ENCODE measurements at regions of chr19 and their contacts with region 1.

Region 1: GRCh38 chr19:45187421-45188100 is 9.0 kb downstream of the BLOC1S3 start:
- DNase-seq: peak in 7 of 9 donors; percentile 29 to 65 (median 55)
- ATAC-seq: peak; percentile 79
- H3K4me3 ChIP-seq: no peak overlapping the region
- H3K4me3 Mint-ChIP-seq: no peak overlapping the region
- H3K27ac ChIP-seq: no peak overlapping the region
- H3K27ac Mint-ChIP-seq: peak overlapping the region in 1 of 9 donors; percentile 55
- H3K4me1 ChIP-seq: no peaks in the 10 kb centered on the region
- H3K4me1 Mint-ChIP-seq: peaks cover 8 to 21% (median 16%) of the 10 kb centered on the region in 7 donors
- H3K27me3 ChIP-seq: no peaks in the 10 kb centered on the region
- H3K27me3 Mint-ChIP-seq: no peaks in the 10 kb centered on the region

Region 2: GRCh38 chr19:44903602-44904425 is 283.7 kb before region 1 on chr19:
- CTCF ChIA-PET with region 1: no interaction called
- POLR2A ChIA-PET with region 1: no interaction called
- intact Hi-C with region 1: loop called in 1 of 2 experiments (anchors 2 kb)
- DNase-seq: peak; percentile 49 to 86 (median 70)
- ATAC-seq: peak; percentile 81
- H3K4me3 ChIP-seq: no peak overlapping the region
- H3K4me3 Mint-ChIP-seq: no peak overlapping the region
- H3K27ac ChIP-seq: no peak overlapping the region
- H3K27ac Mint-ChIP-seq: peak overlapping the region in 2 of 9 donors; percentile 19 to 49
- H3K4me1 ChIP-seq: no peaks in the 10 kb centered on the region
- H3K4me1 Mint-ChIP-seq: peaks cover 5 to 13% (median 10%) of the 10 kb centered on the region in 7 donors
- H3K27me3 ChIP-seq: peaks cover 0 to 4% of the 10 kb centered on the region in 2 donors
- H3K27me3 Mint-ChIP-seq: peaks cover 18 to 22% (median 20%) of the 10 kb centered on the region in 5 donors

Region 3: DNA sequence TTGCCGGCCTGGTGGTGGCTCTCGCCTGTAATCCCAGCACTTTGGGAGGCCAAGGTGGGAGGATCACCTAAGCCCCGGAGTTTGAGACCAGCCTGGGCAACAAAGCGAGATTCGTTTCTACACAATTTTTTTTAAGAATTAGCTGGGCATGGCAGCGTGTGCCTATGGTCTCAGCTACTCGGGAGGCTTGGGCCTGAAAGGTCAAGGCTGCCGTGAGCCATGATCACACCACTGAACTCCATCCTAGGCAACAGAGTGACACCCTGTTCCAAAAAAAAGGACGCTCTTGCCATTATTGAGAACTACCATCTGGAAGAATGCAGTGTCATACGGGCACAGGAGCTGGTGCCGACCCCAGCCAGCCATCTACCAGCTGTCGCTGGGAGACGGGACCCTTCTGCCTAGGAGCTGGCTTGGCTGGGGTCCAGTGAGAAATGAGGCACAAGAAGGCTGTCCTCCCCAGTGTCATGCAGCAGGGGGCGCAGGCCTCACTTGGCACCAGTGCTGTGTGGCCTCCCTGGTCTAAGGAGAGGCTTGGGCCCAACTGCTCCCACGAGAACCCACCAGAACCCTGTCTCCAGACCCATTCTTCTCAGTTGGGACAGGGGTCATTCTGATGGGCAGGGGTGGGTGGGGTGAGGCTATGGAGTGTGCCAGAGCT is 198.5 kb before region 1 on chr19:
- CTCF ChIA-PET with region 1: no interaction called
- POLR2A ChIA-PET with region 1: no interaction called
- intact Hi-C with region 1: loop called in 1 of 2 experiments (anchors 1 kb)
- DNase-seq: peak; percentile 34 to 64 (median 55)
- ATAC-seq: peak; percentile 86
- H3K4me3 ChIP-seq: no peak overlapping the region
- H3K4me3 Mint-ChIP-seq: no peak overlapping the region
- H3K27ac ChIP-seq: no peak overlapping the region
- H3K27ac Mint-ChIP-seq: peak overlapping the region in 2 of 9 donors; percentile 41 to 85
- H3K4me1 ChIP-seq: no peaks in the 10 kb centered on the region
- H3K4me1 Mint-ChIP-seq: peaks cover 0 to 2% (median 0%) of the 10 kb centered on the region in 7 donors
- H3K27me3 ChIP-seq: no peaks in the 10 kb centered on the region
- H3K27me3 Mint-ChIP-seq: no peaks in the 10 kb centered on the region

Region 4: DNA sequence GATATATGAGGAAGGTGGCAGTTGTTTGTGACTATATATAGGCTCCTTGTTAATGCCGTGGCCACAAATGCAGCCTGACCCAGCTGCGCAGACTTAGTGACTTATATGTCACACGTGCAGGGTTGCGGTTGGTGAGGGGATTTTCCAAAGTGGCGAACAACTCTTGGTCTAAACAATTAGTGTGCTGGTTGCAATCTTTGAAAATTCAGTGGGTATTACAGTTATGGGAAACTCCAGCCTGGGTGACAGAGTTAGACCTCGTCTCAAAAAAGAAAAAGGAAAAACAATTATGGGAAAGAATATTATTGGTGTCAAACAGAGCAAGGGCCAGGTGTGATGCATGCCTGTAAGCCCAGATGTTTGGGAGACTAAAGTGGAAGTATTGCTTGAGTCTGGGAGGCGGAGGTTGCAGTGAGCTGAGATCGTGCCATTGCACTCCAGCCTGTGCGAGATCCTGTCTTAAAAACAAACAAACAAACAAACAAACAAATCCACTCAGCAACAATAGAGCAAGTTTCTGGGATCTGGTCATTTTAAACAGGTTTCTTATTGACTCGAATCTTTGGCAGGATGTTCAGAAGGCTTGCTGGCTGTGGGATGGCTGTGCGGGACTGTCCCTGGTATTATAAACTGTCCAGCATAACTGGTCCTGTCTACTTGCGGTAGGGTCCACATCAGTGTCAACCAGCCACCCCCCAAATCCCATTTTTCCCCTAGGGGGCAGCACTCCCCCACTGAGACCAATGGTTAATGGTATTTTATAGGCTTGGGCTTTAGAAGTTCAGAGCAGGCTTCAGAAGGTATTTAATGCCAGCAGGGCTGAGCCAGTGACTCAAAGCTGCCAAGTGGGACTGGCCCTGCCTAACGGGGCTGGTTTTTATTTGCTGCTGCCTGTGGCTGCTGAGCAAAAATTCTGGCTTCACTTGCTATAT is 170.9 kb before region 1 on chr19:
- CTCF ChIA-PET with region 1: interaction called, 3 read pairs
- POLR2A ChIA-PET with region 1: no interaction called
- intact Hi-C with region 1: loop called in 1 of 2 experiments (anchors 1 kb)
- DNase-seq: peak; percentile 28 to 75 (median 61)
- ATAC-seq: peak; percentile 81
- H3K4me3 ChIP-seq: peak overlapping the region; percentile 4
- H3K4me3 Mint-ChIP-seq: peak overlapping the region in 1 of 10 donors; percentile 25
- H3K27ac ChIP-seq: peak overlapping the region; percentile 40
- H3K27ac Mint-ChIP-seq: peak overlapping the region; percentile 23 to 89 (median 54)
- H3K4me1 ChIP-seq: peaks cover 0 to 11% of the 10 kb centered on the region in 2 donors
- H3K4me1 Mint-ChIP-seq: peaks cover 0 to 9% (median 0%) of the 10 kb centered on the region in 7 donors
- H3K27me3 ChIP-seq: no peaks in the 10 kb centered on the region
- H3K27me3 Mint-ChIP-seq: no peaks in the 10 kb centered on the region

Region 5: DNA sequence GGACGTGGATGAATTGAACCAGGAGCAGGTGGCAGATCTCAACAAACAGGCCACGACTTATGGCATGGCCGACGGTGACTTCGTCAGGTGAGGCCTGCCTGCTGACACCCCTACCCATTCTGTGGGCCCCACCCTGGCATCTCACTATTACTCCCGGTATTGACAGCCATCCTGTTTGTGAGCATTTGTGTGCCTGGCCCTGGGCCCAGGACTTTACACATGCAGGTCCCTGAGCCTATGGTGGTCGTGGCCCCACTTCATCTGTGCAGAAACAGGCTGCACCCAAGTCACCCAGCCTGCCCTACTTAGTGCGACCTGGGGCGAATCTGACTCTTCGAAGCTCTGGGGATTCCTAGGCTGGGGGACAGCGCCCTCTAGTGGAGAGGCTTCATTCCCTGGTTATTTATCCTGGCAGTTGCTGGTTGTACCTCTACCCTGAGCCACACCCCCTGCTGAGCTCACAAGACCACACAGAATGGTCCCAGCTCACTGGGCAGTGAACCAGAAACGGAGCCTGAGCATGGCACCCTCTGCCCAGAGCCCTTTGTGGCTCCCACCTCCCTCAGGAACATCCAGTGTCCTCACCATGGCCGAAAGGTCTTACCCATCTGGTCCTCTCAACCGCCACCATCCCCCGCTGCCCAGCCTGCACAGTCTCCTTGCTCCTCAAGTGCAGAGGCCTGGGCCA is 128.1 kb before region 1 on chr19:
- CTCF ChIA-PET with region 1: no interaction called
- POLR2A ChIA-PET with region 1: no interaction called
- intact Hi-C with region 1: loop called in 1 of 2 experiments (anchors 1 kb)
- DNase-seq: peak; percentile 60 to 86 (median 75)
- ATAC-seq: peak; percentile 95
- H3K4me3 ChIP-seq: no peak overlapping the region
- H3K4me3 Mint-ChIP-seq: no peak overlapping the region
- H3K27ac ChIP-seq: no peak overlapping the region
- H3K27ac Mint-ChIP-seq: peak overlapping the region in 8 of 9 donors; percentile 16 to 90 (median 66)
- H3K4me1 ChIP-seq: no peaks in the 10 kb centered on the region
- H3K4me1 Mint-ChIP-seq: peaks cover 0 to 15% (median 3%) of the 10 kb centered on the region in 7 donors
- H3K27me3 ChIP-seq: no peaks in the 10 kb centered on the region
- H3K27me3 Mint-ChIP-seq: no peaks in the 10 kb centered on the region

Region 6: DNA sequence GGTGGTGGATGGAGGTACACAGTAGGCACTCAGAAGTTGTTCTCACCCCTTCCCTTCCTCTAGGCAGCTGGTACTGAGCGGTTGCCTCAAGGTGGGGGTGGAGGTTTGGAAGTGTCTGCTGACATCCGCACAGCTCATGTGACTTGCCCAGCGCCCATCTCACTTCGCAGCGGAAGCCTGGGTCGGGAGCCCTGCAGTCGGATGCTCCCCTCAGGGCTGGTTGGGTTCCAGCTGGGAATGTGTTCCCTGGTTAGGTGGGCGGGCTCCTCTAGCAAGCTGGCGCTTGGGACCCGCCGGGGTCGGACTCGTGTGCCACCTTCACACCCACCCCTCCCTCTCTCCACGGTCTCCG is 84.4 kb before region 1 on chr19:
- CTCF ChIA-PET with region 1: no interaction called
- POLR2A ChIA-PET with region 1: no interaction called
- intact Hi-C with region 1: loop called in 1 of 2 experiments (anchors 1 kb)
- DNase-seq: peak in 8 of 9 donors; percentile 25 to 66 (median 50)
- ATAC-seq: peak; percentile 90
- H3K4me3 ChIP-seq: peak overlapping the region; percentile 58
- H3K4me3 Mint-ChIP-seq: peak overlapping the region; percentile 40 to 85 (median 72)
- H3K27ac ChIP-seq: peak overlapping the region; percentile 68
- H3K27ac Mint-ChIP-seq: peak overlapping the region in 7 of 9 donors; percentile 65 to 88 (median 72)
- H3K4me1 ChIP-seq: peaks cover 24 to 36% of the 10 kb centered on the region in 2 donors
- H3K4me1 Mint-ChIP-seq: peaks cover 35 to 81% (median 66%) of the 10 kb centered on the region in 7 donors
- H3K27me3 ChIP-seq: no peaks in the 10 kb centered on the region
- H3K27me3 Mint-ChIP-seq: no peaks in the 10 kb centered on the region

Region 7: GRCh38 chr19:45340232-45340898 is 152.8 kb after region 1 on chr19 and contains the start of gene KLC3:
- CTCF ChIA-PET with region 1: no interaction called
- POLR2A ChIA-PET with region 1: no interaction called
- intact Hi-C with region 1: loop called in 1 of 2 experiments (anchors 1 kb)
- DNase-seq: peak in 8 of 9 donors; percentile 12 to 66 (median 28)
- ATAC-seq: peak; percentile 28
- H3K4me3 ChIP-seq: no peak within 1 kb of the TSS
- H3K4me3 Mint-ChIP-seq: peak within 1 kb of the TSS; percentile 56 to 82 (median 74)
- H3K27ac ChIP-seq: no peak within 1 kb of the TSS
- H3K27ac Mint-ChIP-seq: peak within 1 kb of the TSS in 2 of 9 donors; percentile 46 to 71
- H3K4me1 ChIP-seq: no peaks in the 10 kb centered on the region
- H3K4me1 Mint-ChIP-seq: peaks cover 4 to 11% (median 9%) of the 10 kb centered on the region in 7 donors
- H3K27me3 ChIP-seq: peaks cover 0 to 12% of the 10 kb centered on the region in 2 donors
- H3K27me3 Mint-ChIP-seq: peaks cover 24 to 39% (median 30%) of the 10 kb centered on the region in 5 donors
- total RNA-seq, gene KLC3: not detected

Measured in naive thymus-derived CD4-positive, alpha-beta T cell (primary cell).